ENCODE measurements at regions of chr7 and their contacts with region 1.

Region 1: DNA sequence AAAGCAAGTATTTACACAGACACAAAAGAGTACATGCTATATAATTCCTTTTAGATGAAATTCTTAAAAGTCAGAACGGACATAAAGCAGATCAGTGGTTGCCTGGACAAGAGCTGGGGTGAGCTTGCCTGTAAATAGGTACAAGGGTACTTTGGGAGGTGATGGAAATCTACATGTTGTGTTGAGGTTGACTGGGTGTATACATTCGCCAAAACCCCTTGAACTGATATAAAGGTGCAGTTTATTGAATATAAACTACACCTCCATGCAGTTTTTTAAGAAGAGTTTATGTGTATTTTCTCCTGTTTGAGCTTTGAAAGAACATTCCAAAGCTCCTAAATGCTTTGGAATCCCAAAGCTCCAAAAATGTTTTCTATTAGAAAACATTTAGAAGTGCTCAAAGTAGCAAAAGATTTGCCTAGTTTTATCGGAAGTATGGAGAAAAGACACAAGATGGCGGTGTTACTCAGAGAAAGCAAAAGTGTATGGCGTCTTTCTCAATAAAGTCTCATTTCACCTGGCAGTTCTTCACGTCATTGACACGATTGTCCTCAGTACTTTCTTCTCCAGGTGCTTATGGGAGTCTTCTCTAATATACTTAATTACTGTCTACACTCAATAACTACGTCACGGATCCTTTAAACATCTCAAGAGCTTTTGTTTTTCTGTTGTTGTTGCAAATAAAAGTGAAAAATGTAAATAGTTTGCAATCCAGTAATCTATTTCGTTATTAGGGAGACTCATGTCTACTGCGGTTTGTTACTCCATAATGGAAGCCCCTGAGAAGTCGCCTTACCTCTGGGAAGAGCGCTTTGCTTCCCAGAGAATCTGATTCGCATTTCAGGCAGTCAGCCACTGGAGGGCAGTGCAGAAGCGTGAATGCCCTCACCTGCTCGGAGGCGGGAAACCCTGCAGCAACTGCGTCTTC is 14.7 kb upstream of the SEC61G start:
- DNase-seq: peak; percentile 80
- H3K4me3 ChIP-seq: peak overlapping the region; percentile 53 to 57
- H3K27ac ChIP-seq: peak overlapping the region; percentile 41 to 49; a peak in 2 of 4 replicates
- H3K4me1 ChIP-seq: 0 out of 4 replicates have a peak, but pooled peaks cover 0 to 6% of the 10 kb centered on the region in 2 experiments
- H3K27me3 ChIP-seq: no peaks in the 10 kb centered on the region
- CTCF ChIP-seq: peak; percentile 99
- EP300 ChIP-seq: no peak
- RAD21 ChIP-seq: peak; percentile 99

Region 2: GRCh38 chr7:54689394-54690049 is 84.2 kb before region 1 on chr7:
- CTCF ChIA-PET with region 1: no interaction called
- POLR2A ChIA-PET with region 1: no interaction called
- DNase-seq: no peak
- H3K4me3 ChIP-seq: no peak overlapping the region
- H3K27ac ChIP-seq: no peak overlapping the region
- H3K4me1 ChIP-seq: no peaks in the 10 kb centered on the region; a peak in 1 of 4 replicates
- H3K27me3 ChIP-seq: peaks cover 8% of the 10 kb centered on the region; the same call in 1 of the 2 replicates
- CTCF ChIP-seq: no peak
- EP300 ChIP-seq: no peak
- RAD21 ChIP-seq: no peak

Region 3: GRCh38 chr7:54758702-54759592 is 14.8 kb before region 1 on chr7 and contains the start of gene SEC61G:
- CTCF ChIA-PET with region 1: interaction called, 67 read pairs
- POLR2A ChIA-PET with region 1: interaction called, 5 read pairs
- DNase-seq: peak; percentile 98
- H3K4me3 ChIP-seq: peak within 1 kb of the TSS; percentile 84 to 100
- H3K27ac ChIP-seq: peak within 1 kb of the TSS; percentile 82 to 97
- H3K4me1 ChIP-seq: peaks cover 7 to 15% of the 10 kb centered on the region in 2 experiments; a peak in 3 of 4 replicates
- H3K27me3 ChIP-seq: no peaks in the 10 kb centered on the region
- CTCF ChIP-seq: no peak
- EP300 ChIP-seq: no peak
- RAD21 ChIP-seq: no peak
- polyA plus RNA-seq, gene SEC61G: 229 and 314 TPM in 2 replicates

Region 4: DNA sequence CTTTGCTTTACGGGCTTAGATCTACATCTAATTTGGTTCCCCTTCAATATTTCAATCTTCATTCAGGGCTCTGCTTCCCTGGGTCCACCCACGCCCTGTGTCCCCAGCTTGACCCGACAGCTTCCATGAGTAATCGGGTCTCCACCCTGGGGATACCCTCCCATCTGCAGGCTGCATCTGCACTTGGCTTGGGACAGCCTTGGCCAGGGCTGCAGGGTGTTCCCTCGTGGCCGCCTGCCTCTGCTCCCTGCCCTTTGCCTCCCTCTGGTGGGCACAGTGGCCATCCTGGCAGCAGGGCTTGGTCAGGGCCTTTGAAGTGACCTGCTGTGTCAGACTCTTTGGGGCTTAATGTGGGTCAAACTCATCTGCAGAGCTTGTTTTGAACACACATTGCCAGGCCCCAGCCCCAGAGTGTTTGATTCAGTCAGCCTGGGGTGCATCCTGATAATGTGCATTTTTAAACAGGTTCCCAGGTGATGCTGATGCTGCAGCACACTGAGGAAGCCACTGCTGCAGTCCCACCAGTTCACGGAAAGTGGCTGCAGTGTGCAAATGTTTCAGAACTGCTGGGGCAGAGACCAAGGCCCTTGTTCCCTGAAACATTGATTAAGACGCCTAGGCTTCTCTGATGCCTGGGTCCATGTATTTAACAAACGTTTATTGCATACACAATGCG is 65.9 kb after region 1 on chr7:
- CTCF ChIA-PET with region 1: interaction called, 20 read pairs
- POLR2A ChIA-PET with region 1: no interaction called
- DNase-seq: peak; percentile 78
- H3K4me3 ChIP-seq: no peak overlapping the region
- H3K27ac ChIP-seq: no peak overlapping the region
- H3K4me1 ChIP-seq: peaks cover 3 to 6% of the 10 kb centered on the region in 2 experiments; a peak in 3 of 4 replicates
- H3K27me3 ChIP-seq: no peaks in the 10 kb centered on the region
- CTCF ChIP-seq: peak; percentile 91
- EP300 ChIP-seq: no peak
- RAD21 ChIP-seq: peak; percentile 82

Region 5: GRCh38 chr7:55140221-55140940 is 366.6 kb after region 1 on chr7:
- CTCF ChIA-PET with region 1: interaction called, 18 read pairs
- POLR2A ChIA-PET with region 1: no interaction called
- DNase-seq: no peak
- H3K4me3 ChIP-seq: no peak overlapping the region
- H3K27ac ChIP-seq: 0 out of 4 replicates have a peak overlapping the region, but pooled peaks of 1 of the 2 experiments have one; percentile 16
- H3K4me1 ChIP-seq: peaks cover 0 to 7% of the 10 kb centered on the region in 2 experiments; a peak in 1 of 4 replicates
- H3K27me3 ChIP-seq: no peaks in the 10 kb centered on the region
- CTCF ChIP-seq: no peak
- EP300 ChIP-seq: no peak
- RAD21 ChIP-seq: no peak

Region 6: GRCh38 chr7:55271069-55271626 is 497.4 kb after region 1 on chr7:
- CTCF ChIA-PET with region 1: interaction called, 26 read pairs
- POLR2A ChIA-PET with region 1: no interaction called
- DNase-seq: no peak
- H3K4me3 ChIP-seq: no peak overlapping the region
- H3K27ac ChIP-seq: no peak overlapping the region
- H3K4me1 ChIP-seq: no peaks in the 10 kb centered on the region; a peak in 1 of 4 replicates
- H3K27me3 ChIP-seq: no peaks in the 10 kb centered on the region
- CTCF ChIP-seq: peak; percentile 61
- EP300 ChIP-seq: no peak
- RAD21 ChIP-seq: peak; percentile 48

Region 7: GRCh38 chr7:55365675-55366460 is 592.1 kb after region 1 on chr7:
- CTCF ChIA-PET with region 1: interaction called, 11 read pairs
- POLR2A ChIA-PET with region 1: interaction called, 3 read pairs
- DNase-seq: peak; percentile 98
- H3K4me3 ChIP-seq: peak overlapping the region; percentile 66 to 95
- H3K27ac ChIP-seq: peak overlapping the region in 1 of 2 experiments; percentile 99; a peak in 3 of 4 replicates
- H3K4me1 ChIP-seq: peaks cover 20 to 23% of the 10 kb centered on the region in 2 experiments
- H3K27me3 ChIP-seq: no peaks in the 10 kb centered on the region
- CTCF ChIP-seq: peak; percentile 43
- EP300 ChIP-seq: peak in 1 of 2 experiments; percentile 72; a peak in 1 of 4 replicates
- RAD21 ChIP-seq: 0 out of 2 replicates have a peak, but pooled peaks have one; percentile 25

Measured in SK-N-SH (cell line).